B cell (primary cell): ENCODE measurements at regions of chr16 and their contacts with region 1.

Region 1: DNA sequence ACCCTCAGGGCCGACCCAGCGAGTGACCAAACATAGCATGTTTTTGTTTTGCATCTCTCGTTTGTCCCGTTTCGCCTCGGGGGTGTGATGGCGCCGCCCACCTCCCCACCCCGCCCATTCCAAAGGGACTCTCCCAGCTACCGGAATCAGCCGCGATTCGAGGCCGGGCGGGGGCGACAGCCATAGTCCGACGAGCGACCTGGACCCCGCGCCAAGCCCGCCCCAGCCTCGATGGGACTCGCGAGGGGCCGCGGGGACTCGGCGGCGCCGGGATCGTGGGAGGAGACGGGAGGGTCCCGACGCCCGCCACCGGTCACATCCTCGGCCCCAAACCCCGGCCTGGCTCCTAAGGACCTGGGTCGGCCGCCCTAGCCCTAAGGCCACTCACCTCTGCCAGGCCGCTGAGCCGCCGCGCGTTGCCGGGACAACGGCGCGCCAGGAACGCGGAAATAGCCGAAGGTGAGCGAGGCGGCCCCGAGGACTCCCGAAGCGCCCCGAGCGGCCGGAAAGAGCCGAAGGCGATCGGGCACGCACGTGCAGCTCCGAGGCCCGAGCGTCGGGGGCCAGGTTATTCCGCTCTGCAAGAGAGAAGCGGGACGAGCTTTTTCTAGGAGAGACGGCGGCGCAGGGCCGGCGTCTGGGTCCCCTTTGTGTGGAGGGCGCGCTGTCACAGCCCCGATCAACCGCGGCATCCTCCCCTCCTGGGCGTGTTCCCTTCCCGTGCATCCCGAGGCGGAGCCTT is 1.4 kb downstream of the IFT140 start:
- DNase-seq: peak; percentile 95
- ATAC-seq: peak; percentile 46
- H3K4me3 ChIP-seq: peak overlapping the region in 4 of 5 experiments; percentile 61 to 75 (median 70)
- H3K4me3 Mint-ChIP-seq: peak overlapping the region; percentile 94
- H3K27ac ChIP-seq: peak overlapping the region; percentile 48 to 63
- H3K27ac Mint-ChIP-seq: peak overlapping the region; percentile 80
- H3K4me1 ChIP-seq: peaks cover 37 to 59% of the 10 kb centered on the region in 2 donors
- H3K4me1 Mint-ChIP-seq: peaks cover 39% of the 10 kb centered on the region
- H3K27me3 ChIP-seq: peaks cover 0 to 16% (median 2%) of the 10 kb centered on the region in 4 experiments
- H3K27me3 Mint-ChIP-seq: peaks cover 6% of the 10 kb centered on the region
- CTCF ChIP-seq: no peak

Region 2: DNA sequence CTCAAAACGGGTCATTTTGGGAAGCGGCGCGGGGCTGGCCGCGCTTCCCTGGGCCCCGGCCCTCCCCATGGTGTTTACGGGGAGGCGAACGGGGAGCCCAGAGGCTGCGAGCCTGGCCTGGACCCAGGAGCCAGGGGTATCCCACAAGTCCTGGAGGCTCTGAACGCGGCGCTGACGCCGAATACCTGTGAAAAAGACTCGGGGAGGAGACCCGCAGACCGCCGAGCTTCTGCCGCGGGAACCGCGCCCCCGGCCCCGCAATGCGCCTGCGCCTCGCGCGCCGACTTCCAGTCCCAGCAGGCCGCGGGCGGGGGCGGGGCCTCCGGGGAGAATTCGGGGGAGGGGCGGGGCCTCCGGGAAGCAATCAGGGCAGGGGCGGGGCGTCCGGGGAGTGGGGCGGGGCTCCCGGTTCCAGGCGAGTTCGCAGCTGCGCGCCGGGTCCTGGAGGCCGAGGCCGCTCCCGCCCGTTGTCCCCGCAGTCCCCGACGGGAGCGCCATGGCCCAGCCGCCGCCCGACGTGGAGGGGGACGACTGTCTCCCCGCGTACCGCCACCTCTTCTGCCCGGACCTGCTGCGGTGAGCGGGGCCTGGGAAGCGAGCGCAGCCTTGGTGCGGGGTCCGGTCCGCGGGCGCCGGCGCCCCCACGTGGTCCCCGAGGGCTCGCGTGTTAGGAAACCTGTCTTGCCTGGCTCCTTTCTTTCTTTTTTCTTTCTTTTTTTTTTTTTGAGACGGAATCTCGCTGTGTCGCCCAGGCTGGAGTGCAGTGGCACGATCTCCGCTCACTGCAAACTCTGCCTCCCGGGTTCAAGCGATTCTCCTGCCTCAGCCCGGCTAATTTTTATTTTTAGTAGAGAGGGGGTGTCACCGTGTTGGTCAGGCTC is 1208.7 kb before region 1 on chr16 and contains the start of gene DECR2:
- CTCF ChIA-PET with region 1: no interaction called
- POLR2A ChIA-PET with region 1: no interaction called
- intact Hi-C with region 1: loop called (anchors 5 kb)
- DNase-seq: peak; percentile 94
- ATAC-seq: peak; percentile 82
- H3K4me3 ChIP-seq: peak within 1 kb of the TSS; percentile 57 to 94 (median 91)
- H3K4me3 Mint-ChIP-seq: peak within 1 kb of the TSS; percentile 99
- H3K27ac ChIP-seq: peak within 1 kb of the TSS; percentile 78 to 90
- H3K27ac Mint-ChIP-seq: peak within 1 kb of the TSS; percentile 100
- H3K4me1 ChIP-seq: peaks cover 13 to 20% of the 10 kb centered on the region in 2 donors
- H3K4me1 Mint-ChIP-seq: peaks cover 14% of the 10 kb centered on the region
- H3K27me3 ChIP-seq: no peaks in the 10 kb centered on the region
- H3K27me3 Mint-ChIP-seq: no peaks in the 10 kb centered on the region
- CTCF ChIP-seq: peak; percentile 76
- total RNA-seq, gene DECR2: 9.0 and 11.0 TPM in 2 replicates

Region 3: DNA sequence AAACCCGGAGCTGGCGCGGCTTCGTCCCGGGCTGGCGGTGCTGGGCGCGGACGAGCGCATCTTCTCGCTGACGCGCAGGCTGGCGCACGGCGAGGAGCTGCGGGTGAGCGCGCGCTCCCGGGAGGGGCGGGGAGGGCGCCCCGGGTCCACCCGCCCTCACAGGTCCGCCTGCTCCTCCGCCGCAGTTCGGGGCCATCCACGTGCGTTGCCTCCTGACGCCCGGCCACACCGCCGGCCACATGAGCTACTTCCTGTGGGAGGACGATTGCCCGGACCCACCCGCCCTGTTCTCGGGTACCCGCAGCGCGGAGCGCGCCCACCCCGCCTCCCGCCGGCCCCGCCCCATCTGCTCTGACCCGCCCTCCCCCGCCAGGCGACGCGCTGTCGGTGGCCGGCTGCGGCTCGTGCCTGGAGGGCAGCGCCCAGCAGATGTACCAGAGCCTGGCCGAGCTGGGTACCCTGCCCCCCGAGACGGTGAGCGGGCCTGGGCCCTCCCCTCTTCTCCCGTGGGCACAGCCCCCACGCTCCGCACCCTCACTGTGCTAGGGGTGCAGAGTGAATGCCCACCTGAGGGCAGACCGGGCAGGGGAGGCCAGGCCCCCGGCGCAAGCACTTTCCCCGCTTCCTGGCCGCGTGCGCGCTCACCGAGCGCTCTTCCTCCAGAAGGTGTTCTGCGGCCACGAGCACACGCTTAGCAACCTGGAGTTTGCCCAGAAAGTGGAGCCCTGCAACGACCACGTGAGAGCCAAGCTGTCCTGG is 882.1 kb before region 1 on chr16:
- CTCF ChIA-PET with region 1: no interaction called
- POLR2A ChIA-PET with region 1: no interaction called
- intact Hi-C with region 1: loop called (anchors 5 kb)
- DNase-seq: peak; percentile 88
- ATAC-seq: peak; percentile 52
- H3K4me3 ChIP-seq: peak overlapping the region in 4 of 5 experiments; percentile 69 to 81 (median 74)
- H3K4me3 Mint-ChIP-seq: peak overlapping the region; percentile 73
- H3K27ac ChIP-seq: no peak overlapping the region
- H3K27ac Mint-ChIP-seq: peak overlapping the region; percentile 26
- H3K4me1 ChIP-seq: peaks cover 10 to 28% of the 10 kb centered on the region in 2 donors
- H3K4me1 Mint-ChIP-seq: peaks cover 16% of the 10 kb centered on the region
- H3K27me3 ChIP-seq: no peaks in the 10 kb centered on the region
- H3K27me3 Mint-ChIP-seq: no peaks in the 10 kb centered on the region
- CTCF ChIP-seq: no peak

Region 4: GRCh38 chr16:1342526-1343427 is 267.7 kb before region 1 on chr16:
- CTCF ChIA-PET with region 1: no interaction called
- POLR2A ChIA-PET with region 1: no interaction called
- intact Hi-C with region 1: loop called (anchors 10 kb)
- DNase-seq: peak; percentile 98
- ATAC-seq: peak; percentile 86
- H3K4me3 ChIP-seq: peak overlapping the region in 4 of 5 experiments; percentile 38 to 68 (median 44)
- H3K4me3 Mint-ChIP-seq: peak overlapping the region; percentile 86
- H3K27ac ChIP-seq: peak overlapping the region in 1 of 2 donors; percentile 42
- H3K27ac Mint-ChIP-seq: peak overlapping the region; percentile 91
- H3K4me1 ChIP-seq: peaks cover 16 to 30% of the 10 kb centered on the region in 2 donors
- H3K4me1 Mint-ChIP-seq: peaks cover 23% of the 10 kb centered on the region
- H3K27me3 ChIP-seq: no peaks in the 10 kb centered on the region
- H3K27me3 Mint-ChIP-seq: no peaks in the 10 kb centered on the region
- CTCF ChIP-seq: peak; percentile 23

Region 5: DNA sequence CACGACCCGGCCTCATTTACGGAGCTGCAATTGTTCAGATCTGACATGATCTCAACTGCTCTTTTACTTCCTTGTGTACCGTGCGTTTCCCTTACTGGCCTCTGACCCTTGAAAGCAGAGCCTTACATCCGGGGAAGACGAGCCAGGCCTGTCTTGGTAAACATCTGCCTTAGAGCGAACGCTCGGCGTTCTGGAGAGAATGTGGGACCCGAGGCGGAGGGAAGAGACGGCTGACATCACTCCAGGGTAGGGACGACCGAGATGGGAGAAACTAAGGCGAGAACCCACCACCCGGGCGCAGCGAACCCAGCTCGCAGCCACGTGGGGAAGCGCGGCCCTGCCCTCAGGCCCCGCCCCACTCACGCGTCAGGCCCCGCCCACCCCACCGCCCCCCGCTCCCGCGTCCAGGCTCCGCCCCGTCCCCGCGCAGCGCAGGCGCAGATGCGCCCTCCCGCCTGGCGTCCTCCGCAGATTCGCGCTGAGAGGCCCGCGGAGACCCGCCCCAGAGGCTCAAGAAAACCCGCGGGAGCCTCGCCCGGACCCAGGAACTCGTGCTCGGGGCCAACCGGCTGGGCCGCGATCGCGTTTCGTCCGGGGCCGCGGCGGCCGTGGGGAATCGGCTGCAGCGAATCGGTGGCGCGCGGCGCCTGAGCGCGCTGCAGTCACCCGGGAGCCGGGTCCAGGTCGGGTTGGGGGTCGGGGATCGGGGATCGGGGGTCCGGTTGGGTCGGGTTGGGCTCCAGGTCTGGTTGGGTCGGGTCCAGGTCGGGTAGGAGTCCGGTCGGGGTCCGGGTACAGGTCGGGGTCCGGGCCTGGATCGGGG is 117.3 kb before region 1 on chr16 and contains the start of gene TELO2:
- CTCF ChIA-PET with region 1: no interaction called
- POLR2A ChIA-PET with region 1: no interaction called
- intact Hi-C with region 1: loop called (anchors 5 kb)
- DNase-seq: peak; percentile 92
- ATAC-seq: peak; percentile 89
- H3K4me3 ChIP-seq: peak within 1 kb of the TSS; percentile 36 to 87 (median 75)
- H3K4me3 Mint-ChIP-seq: peak within 1 kb of the TSS; percentile 97
- H3K27ac ChIP-seq: peak within 1 kb of the TSS; percentile 95 to 96
- H3K27ac Mint-ChIP-seq: peak within 1 kb of the TSS; percentile 99
- H3K4me1 ChIP-seq: peaks cover 17 to 25% of the 10 kb centered on the region in 2 donors
- H3K4me1 Mint-ChIP-seq: peaks cover 17% of the 10 kb centered on the region
- H3K27me3 ChIP-seq: no peaks in the 10 kb centered on the region
- H3K27me3 Mint-ChIP-seq: no peaks in the 10 kb centered on the region
- CTCF ChIP-seq: no peak
- total RNA-seq, gene TELO2: 81.9 and 88.4 TPM in 2 replicates

Region 6: GRCh38 chr16:1621851-1622250 is 11.4 kb after region 1 on chr16:
- CTCF ChIA-PET with region 1: no interaction called
- POLR2A ChIA-PET with region 1: no interaction called
- intact Hi-C with region 1: no loop called
- DNase-seq: peak; percentile 67
- ATAC-seq: peak; percentile 62
- H3K4me3 ChIP-seq: no peak overlapping the region
- H3K4me3 Mint-ChIP-seq: no peak overlapping the region
- H3K27ac ChIP-seq: peak overlapping the region in 1 of 2 donors; percentile 32
- H3K27ac Mint-ChIP-seq: peak overlapping the region; percentile 66
- H3K4me1 ChIP-seq: peaks cover 10 to 20% of the 10 kb centered on the region in 2 donors
- H3K4me1 Mint-ChIP-seq: peaks cover 20% of the 10 kb centered on the region
- H3K27me3 ChIP-seq: no peaks in the 10 kb centered on the region
- H3K27me3 Mint-ChIP-seq: no peaks in the 10 kb centered on the region
- CTCF ChIP-seq: no peak

Region 7: GRCh38 chr16:1667916-1668315 is 57.5 kb after region 1 on chr16:
- CTCF ChIA-PET with region 1: no interaction called
- POLR2A ChIA-PET with region 1: no interaction called
- intact Hi-C with region 1: no loop called
- DNase-seq: no peak
- ATAC-seq: no peak
- H3K4me3 ChIP-seq: no peak overlapping the region
- H3K4me3 Mint-ChIP-seq: no peak overlapping the region
- H3K27ac ChIP-seq: no peak overlapping the region
- H3K27ac Mint-ChIP-seq: no peak overlapping the region
- H3K4me1 ChIP-seq: no peaks in the 10 kb centered on the region
- H3K4me1 Mint-ChIP-seq: no peaks in the 10 kb centered on the region
- H3K27me3 ChIP-seq: no peaks in the 10 kb centered on the region
- H3K27me3 Mint-ChIP-seq: no peaks in the 10 kb centered on the region
- CTCF ChIP-seq: no peak

Region 8: GRCh38 chr16:1677802-1678496 is 67.5 kb after region 1 on chr16 and contains the start of gene JPT2:
- CTCF ChIA-PET with region 1: interaction called, 5 read pairs
- POLR2A ChIA-PET with region 1: interaction called, 5 read pairs
- intact Hi-C with region 1: loop called (anchors 1 kb)
- DNase-seq: peak; percentile 98
- ATAC-seq: peak; percentile 94
- H3K4me3 ChIP-seq: peak within 1 kb of the TSS; percentile 38 to 77 (median 60)
- H3K4me3 Mint-ChIP-seq: peak within 1 kb of the TSS; percentile 89
- H3K27ac ChIP-seq: peak within 1 kb of the TSS in 1 of 2 donors; percentile 83
- H3K27ac Mint-ChIP-seq: peak within 1 kb of the TSS; percentile 88
- H3K4me1 ChIP-seq: peaks cover 8 to 14% of the 10 kb centered on the region in 2 donors
- H3K4me1 Mint-ChIP-seq: peaks cover 14% of the 10 kb centered on the region
- H3K27me3 ChIP-seq: no peaks in the 10 kb centered on the region
- H3K27me3 Mint-ChIP-seq: no peaks in the 10 kb centered on the region
- CTCF ChIP-seq: no peak
- total RNA-seq, gene JPT2: 42.1 and 45.7 TPM in 2 replicates

Region 9: DNA sequence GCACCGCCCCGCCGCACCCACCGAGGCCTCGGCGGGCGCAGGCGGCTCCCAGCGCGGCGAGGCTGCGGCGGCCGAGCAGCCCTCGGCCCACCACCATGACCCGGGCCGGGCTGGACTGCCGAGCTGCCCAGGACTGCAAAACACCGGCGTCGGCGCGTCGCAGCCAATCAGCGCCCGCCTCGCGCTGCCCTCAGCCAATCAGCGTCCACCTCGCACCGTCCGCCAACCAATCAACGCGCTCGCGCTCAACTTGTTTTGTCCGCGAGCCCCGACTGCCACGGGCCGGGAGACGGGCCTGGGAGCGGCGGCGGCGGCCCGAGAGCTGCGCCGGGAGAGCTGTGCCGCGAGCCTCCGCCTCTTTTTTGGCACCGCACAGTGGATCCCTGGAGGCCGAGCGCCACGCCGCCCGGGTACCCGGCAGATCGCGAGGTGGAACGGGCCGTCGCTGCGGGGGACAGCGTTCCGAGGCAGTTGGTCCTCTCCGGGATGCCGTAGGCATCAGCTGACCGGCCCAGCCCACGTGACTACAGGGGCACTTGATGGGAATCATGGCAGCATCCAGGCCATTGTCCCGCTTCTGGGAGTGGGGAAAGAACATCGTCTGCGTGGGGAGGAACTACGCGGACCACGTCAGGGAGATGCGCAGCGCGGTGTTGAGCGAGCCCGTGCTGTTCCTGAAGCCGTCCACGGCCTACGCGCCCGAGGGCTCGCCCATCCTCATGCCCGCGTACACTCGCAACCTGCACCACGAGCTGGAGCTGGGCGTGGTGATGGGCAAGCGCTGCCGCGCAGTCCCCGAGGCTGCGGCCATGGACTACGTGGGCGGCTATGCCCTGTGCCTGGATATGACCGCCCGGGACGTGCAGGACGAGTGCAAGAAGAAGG is 216.5 kb after region 1 on chr16 and contains the starts of genes FAHD1 and HAGH:
- CTCF ChIA-PET with region 1: no interaction called
- POLR2A ChIA-PET with region 1: interaction called, 5 read pairs
- intact Hi-C with region 1: loop called (anchors 5 kb)
- DNase-seq: peak; percentile 98
- ATAC-seq: peak; percentile 84
- H3K4me3 ChIP-seq: peak within 1 kb of the TSS; percentile 70 to 95 (median 74)
- H3K4me3 Mint-ChIP-seq: peak within 1 kb of the TSS; percentile 98
- H3K27ac ChIP-seq: peak within 1 kb of the TSS; percentile 38 to 81
- H3K27ac Mint-ChIP-seq: peak within 1 kb of the TSS; percentile 96
- H3K4me1 ChIP-seq: peaks cover 25% of the 10 kb centered on the region in 2 donors
- H3K4me1 Mint-ChIP-seq: peaks cover 44% of the 10 kb centered on the region
- H3K27me3 ChIP-seq: no peaks in the 10 kb centered on the region
- H3K27me3 Mint-ChIP-seq: no peaks in the 10 kb centered on the region
- CTCF ChIP-seq: no peak
- total RNA-seq, gene FAHD1: 11.0 and 13.3 TPM in 2 replicates
- total RNA-seq, gene HAGH: 49.7 and 50.6 TPM in 2 replicates

Region 10: GRCh38 chr16:1845985-1846384 is 235.5 kb after region 1 on chr16:
- CTCF ChIA-PET with region 1: no interaction called
- POLR2A ChIA-PET with region 1: no interaction called
- intact Hi-C with region 1: no loop called
- DNase-seq: no peak
- ATAC-seq: no peak
- H3K4me3 ChIP-seq: no peak overlapping the region
- H3K4me3 Mint-ChIP-seq: no peak overlapping the region
- H3K27ac ChIP-seq: no peak overlapping the region
- H3K27ac Mint-ChIP-seq: no peak overlapping the region
- H3K4me1 ChIP-seq: no peaks in the 10 kb centered on the region
- H3K4me1 Mint-ChIP-seq: no peaks in the 10 kb centered on the region
- H3K27me3 ChIP-seq: peaks cover 0 to 4% (median 1%) of the 10 kb centered on the region in 4 experiments
- H3K27me3 Mint-ChIP-seq: peaks cover 18% of the 10 kb centered on the region
- CTCF ChIP-seq: no peak